CD4-positive, alpha-beta memory T cell (primary cell): ENCODE measurements at regions of chr12 and their contacts with region 1.

Region 1: GRCh38 chr12:64660237-64661018 is 50.1 kb downstream of the RASSF3 start:
- DNase-seq: no peak
- H3K4me3 ChIP-seq: no peak overlapping the region
- H3K4me3 Mint-ChIP-seq: peak overlapping the region in 7 of 8 donors; percentile 29 to 76 (median 46)
- H3K27ac ChIP-seq: peak overlapping the region; percentile 43
- H3K27ac Mint-ChIP-seq: peak overlapping the region; percentile 70 to 94 (median 87)
- H3K4me1 ChIP-seq: peaks cover 99% of the 10 kb centered on the region
- H3K4me1 Mint-ChIP-seq: peaks cover 65 to 96% (median 83%) of the 10 kb centered on the region in 4 donors
- H3K27me3 ChIP-seq: no peaks in the 10 kb centered on the region
- H3K27me3 Mint-ChIP-seq: no peaks in the 10 kb centered on the region

Region 2: DNA sequence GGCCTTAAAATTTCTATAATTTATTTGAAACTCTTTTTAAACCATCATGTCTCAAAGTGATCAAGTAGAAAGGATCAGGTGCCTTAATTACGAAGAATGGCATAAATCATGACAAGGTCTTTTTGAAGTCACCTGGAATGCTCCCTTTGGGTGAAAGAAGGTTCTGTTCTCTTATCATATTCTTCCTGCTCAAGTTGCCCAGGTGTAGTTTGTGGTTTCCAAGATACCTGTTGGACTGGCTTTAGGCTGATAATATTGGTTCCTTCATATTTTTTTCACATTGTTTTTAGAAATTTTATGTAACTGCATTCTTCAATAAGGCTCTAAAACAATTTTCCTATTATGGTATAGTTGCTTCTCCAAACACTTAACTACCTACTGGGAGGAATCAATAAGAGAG is 21.0 kb before region 1 on chr12:
- CTCF ChIA-PET with region 1: interaction called, 4 read pairs
- POLR2A ChIA-PET with region 1: interaction called, 6 read pairs
- intact Hi-C with region 1: loop called (anchors 2 kb)
- DNase-seq: no peak
- H3K4me3 ChIP-seq: no peak overlapping the region
- H3K4me3 Mint-ChIP-seq: peak overlapping the region in 5 of 8 donors; percentile 3 to 48 (median 22)
- H3K27ac ChIP-seq: no peak overlapping the region
- H3K27ac Mint-ChIP-seq: peak overlapping the region in 3 of 7 donors; percentile 64 to 72 (median 64)
- H3K4me1 ChIP-seq: peaks cover 90% of the 10 kb centered on the region
- H3K4me1 Mint-ChIP-seq: peaks cover 54 to 83% (median 68%) of the 10 kb centered on the region in 4 donors
- H3K27me3 ChIP-seq: no peaks in the 10 kb centered on the region
- H3K27me3 Mint-ChIP-seq: no peaks in the 10 kb centered on the region

Region 3: DNA sequence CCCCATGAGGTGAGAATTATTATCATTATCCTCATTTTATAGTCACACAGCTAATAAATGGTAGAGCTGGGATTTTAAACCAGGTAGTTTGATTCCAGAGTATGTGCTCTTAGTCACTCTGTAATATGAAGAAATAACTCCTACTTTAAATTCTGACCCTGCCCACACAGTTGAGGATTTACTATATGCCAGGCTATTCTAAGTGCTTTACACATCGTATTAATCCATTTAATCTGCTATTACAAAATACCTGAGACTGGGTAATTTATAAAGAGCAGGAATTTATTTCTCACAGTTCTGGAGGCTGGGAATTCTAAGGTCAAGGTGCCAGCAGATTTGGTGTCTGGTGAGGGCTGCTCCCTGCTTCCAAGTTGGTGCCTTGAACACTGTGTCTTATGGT is 480.3 kb after region 1 on chr12:
- CTCF ChIA-PET with region 1: no interaction called
- POLR2A ChIA-PET with region 1: no interaction called
- intact Hi-C with region 1: no loop called
- DNase-seq: no peak
- H3K4me3 ChIP-seq: no peak overlapping the region
- H3K4me3 Mint-ChIP-seq: no peak overlapping the region
- H3K27ac ChIP-seq: no peak overlapping the region
- H3K27ac Mint-ChIP-seq: no peak overlapping the region
- H3K4me1 ChIP-seq: no peaks in the 10 kb centered on the region
- H3K4me1 Mint-ChIP-seq: no peaks in the 10 kb centered on the region
- H3K27me3 ChIP-seq: no peaks in the 10 kb centered on the region
- H3K27me3 Mint-ChIP-seq: peaks cover 15 to 19% of the 10 kb centered on the region in 2 donors